Left ventricle myocardium superior (tissue), 1 donor: ENCODE measurements at regions of chr15 and their contacts with region 1.

Region 1: DNA sequence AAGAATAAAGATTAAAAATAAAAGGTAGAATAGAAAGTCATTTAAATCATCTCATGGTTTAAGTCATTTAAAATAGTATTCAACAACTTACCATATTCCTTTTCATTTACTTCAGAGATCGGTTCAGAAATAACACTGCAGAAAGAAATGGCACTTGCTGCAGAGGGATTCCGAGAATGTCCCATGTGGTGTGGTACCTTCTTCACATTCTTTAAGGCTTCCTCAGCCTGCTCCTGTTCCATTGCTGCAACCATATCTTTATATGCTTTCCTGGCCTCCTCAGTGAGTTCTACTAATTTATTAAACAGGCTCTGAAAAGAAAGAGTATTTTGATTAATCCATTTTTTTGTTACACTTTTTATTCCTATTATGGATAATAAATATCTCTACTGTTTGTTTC is 32.6 kb upstream of the SHC4 start:
- DNase-seq: no peak
- ATAC-seq: no peak

Region 2: DNA sequence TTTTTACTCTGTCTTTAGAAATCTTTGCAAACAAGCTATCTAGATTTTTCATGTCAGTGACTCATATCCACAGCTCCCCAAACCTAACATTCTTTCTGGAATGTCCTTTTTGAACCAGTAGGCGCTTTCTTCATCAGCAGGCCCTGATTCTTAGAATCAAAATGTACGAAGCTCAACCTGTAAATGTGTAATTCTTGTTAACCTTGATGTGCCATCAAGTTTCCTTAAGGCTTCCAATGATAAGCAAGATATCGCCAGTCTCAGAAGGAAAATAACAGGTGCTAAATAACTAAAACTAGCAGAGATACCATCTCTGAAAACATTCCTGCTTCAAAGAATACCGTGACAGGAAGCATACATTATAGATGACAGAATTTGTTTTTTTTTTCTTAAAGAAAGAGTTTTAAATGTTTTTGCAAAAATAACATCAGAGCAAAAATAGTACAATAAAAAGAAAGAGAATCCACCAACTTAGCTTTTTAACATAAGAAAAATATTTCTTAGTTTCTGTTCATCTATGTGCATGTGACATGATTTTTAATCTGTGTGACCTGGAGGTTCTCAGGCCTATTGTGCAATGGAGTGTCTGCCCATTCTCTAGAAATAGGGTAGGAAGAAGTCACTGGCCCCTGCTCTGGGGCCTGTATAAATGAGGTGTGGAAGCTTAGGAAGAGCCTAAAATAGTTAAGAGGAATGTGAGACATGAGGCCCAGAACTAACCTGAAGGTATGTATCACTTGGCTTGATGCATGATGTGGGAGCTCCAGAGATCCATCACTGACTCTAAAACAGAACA is 64.6 kb after region 1 on chr15:
- intact Hi-C with region 1: loop called (anchors 10 kb)
- DNase-seq: no peak
- ATAC-seq: no peak

Region 3: DNA sequence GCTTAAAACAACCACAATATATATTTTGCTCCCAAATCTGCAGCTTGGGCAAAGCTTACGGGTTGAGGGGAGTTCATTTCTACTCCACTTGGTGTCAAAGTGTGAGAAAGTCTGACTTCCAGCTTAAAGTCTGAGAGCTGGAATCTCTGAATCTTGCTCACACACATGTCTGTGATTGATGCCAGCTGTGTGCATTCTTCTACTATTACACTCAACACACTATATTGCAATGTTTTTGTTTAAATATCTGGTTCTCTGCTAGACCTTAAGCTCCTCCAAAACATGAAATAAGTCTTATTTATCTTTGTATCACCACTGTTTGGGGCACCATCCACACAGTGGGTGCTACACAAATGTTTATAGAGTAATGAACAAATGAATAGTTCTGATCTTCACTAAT is 86.7 kb after region 1 on chr15:
- intact Hi-C with region 1: no loop called
- DNase-seq: no peak
- ATAC-seq: no peak